ENCODE measurements at regions of chr2 and their contacts with region 1.

Region 1: GRCh38 chr2:47155091-47155876 is at the start of gene STPG4:
- DNase-seq: no peak
- ATAC-seq: peak; percentile 49
- H3K4me3 ChIP-seq: no peak within 1 kb of the TSS
- H3K27ac ChIP-seq: peak within 1 kb of the TSS; percentile 4
- H3K4me1 ChIP-seq: peaks cover 10% of the 10 kb centered on the region
- H3K27me3 ChIP-seq: no peaks in the 10 kb centered on the region
- CTCF ChIP-seq: no peak
- EP300 ChIP-seq: no peak
- POLR2A ChIP-seq: no peak
- RAD21 ChIP-seq: no peak
- total RNA-seq, gene STPG4: 0.15 TPM in 2 replicates

Region 2: DNA sequence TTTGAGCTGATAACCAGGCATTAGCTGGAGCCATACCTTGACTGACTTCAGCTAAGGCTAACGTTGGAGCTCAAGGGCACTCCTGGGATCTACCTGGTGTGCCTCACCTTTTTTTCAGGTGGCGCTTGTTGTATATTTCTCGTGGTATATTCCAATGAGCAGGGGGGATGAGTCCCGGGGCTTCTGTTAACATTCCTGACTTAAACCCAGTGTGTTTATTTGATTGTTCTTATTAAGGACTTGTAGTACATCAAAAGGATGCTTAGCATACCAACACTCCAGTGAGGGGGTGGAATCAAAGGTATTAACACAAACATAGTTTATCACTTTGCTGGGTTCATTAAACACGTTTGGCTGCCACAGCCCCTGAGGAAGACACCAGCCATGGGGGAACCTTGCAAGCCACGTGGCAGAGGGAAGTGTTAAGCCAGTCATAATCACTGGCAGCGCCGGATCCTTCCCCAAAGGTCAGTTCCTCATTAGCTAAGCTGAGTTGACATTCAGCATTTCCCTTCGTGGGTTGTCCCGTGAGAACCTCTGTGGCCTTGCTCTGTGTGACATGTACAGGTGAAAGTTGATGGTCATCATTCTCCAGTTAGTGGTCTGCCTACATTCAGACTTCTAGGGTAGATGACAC is 120.2 kb before region 1 on chr2:
- CTCF ChIA-PET with region 1: no interaction called
- POLR2A ChIA-PET with region 1: no interaction called
- in situ Hi-C with region 1: loop called (anchors 5 kb)
- intact Hi-C with region 1: no loop called
- DNase-seq: peak; percentile 80
- ATAC-seq: peak; percentile 28
- H3K4me3 ChIP-seq: peak overlapping the region in 2 of 3 experiments; percentile 16 to 29; a peak in 3 of 6 replicates
- H3K27ac ChIP-seq: peak overlapping the region; percentile 99
- H3K4me1 ChIP-seq: peaks cover 94% of the 10 kb centered on the region
- H3K27me3 ChIP-seq: no peaks in the 10 kb centered on the region
- CTCF ChIP-seq: 0 out of 2 replicates have a peak, but pooled peaks have one; percentile 1
- EP300 ChIP-seq: peak in 1 of 2 experiments; percentile 60; a peak in 2 of 4 replicates
- POLR2A ChIP-seq: peak in 1 of 2 experiments; percentile 14; a peak in 2 of 4 replicates
- RAD21 ChIP-seq: peak; percentile 25; the same call in 1 of the 2 replicates

Measured in HepG2 (cell line).